RWPE1 (cell line): ENCODE measurements at regions of chr15 and their contacts with region 1.

Region 1: DNA sequence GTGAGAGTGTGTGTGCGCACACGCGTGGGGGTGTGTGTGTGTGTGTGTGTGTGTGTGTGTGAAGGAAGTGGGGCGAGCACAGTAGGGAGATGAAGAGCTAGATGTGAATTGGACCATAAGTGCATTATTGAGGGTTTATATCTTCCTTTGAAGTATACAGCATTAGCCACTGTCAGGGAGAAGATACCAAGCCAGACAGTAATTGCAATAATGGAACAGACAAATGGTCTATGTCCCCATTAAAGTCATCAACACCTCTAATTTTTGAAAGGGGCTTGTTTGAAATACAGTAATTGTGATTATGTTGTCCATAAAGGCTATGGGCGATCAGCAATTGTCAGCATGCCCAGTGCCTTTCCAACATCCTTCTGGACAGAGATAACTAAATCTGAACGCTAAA is 429.2 kb upstream of the NR2F2 start:
- DNase-seq: no peak
- H3K27ac ChIP-seq: no peak overlapping the region
- CTCF ChIP-seq: no peak

Region 2: GRCh38 chr15:95215017-95215416 is 686.3 kb before region 1 on chr15:
- CTCF ChIA-PET with region 1: interaction called, 11 read pairs
- POLR2A ChIA-PET with region 1: no interaction called
- DNase-seq: no peak
- H3K27ac ChIP-seq: no peak overlapping the region
- CTCF ChIP-seq: no peak

Region 3: DNA sequence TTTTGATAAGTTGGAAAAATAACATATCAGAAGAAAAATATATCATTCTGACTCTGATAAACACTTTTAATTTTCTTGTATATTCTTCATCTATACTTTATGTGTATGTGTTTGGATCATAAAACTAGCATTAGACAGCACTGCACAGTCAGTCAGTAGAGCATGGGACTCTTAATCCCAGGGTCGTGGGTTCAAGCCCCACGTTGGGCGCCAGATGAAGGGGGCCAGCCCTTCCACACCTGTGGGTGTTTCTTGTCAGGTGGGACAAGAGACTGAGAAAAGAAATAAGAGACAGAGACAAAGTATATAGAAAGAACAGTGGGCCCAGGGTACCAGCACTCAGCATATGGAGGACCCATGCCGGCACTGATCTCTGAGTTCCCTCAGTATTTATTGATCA is 116.8 kb before region 1 on chr15:
- CTCF ChIA-PET with region 1: no interaction called
- POLR2A ChIA-PET with region 1: no interaction called
- DNase-seq: no peak
- H3K27ac ChIP-seq: no peak overlapping the region
- CTCF ChIP-seq: no peak